Calu3 (cell line): ENCODE measurements at regions of chr1 and their contacts with region 1.

Region 1: DNA sequence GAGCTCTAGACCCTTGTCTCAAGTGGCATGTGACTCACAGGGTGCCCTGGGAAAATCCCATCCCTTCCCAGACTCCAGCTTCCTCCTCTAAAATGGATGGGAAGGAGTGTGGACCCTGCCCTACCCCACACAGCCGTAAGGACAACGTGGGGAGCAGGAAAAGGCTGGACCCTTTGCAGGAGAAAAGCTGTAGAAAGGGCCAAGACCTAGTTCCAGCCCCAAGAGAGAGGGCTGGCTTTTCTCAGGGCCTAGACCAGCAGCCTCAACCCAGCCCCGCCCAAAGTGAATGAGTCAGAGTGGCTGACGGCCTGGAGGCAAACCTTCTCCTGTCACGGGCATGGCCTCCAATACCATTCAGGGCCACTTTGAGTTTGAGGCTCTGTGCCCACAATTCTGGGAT is 1.1 kb downstream of the LAMB3 start:
- DNase-seq: peak; percentile 91
- H3K4me3 Mint-ChIP-seq: peak overlapping the region; percentile 89
- H3K27ac Mint-ChIP-seq: peak overlapping the region; percentile 97
- H3K4me1 Mint-ChIP-seq: peaks cover 83% of the 10 kb centered on the region
- H3K27me3 Mint-ChIP-seq: no peaks in the 10 kb centered on the region
- CTCF ChIP-seq: no peak

Region 2: DNA sequence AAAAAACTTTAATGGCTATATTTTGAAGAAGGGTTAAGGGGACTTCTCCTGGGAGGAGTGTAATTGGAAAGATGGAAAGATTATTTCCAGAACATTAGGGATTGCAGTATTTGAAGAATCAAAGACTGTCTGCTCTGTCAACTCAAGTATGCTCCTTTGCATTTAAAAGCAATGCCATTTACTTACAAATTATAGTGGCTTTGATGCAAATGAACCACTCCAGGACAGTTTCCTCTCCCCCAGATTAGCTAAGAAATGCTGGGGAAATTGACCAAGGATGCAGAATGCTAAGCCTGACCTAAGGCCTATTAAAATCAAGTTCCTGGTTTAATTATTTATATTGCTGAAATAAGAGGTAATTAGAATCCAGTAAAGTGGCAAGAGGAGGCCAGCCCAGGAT is 178.1 kb before region 1 on chr1:
- CTCF ChIA-PET with region 1: no interaction called
- intact Hi-C with region 1: no loop called
- DNase-seq: no peak
- H3K4me3 Mint-ChIP-seq: no peak overlapping the region
- H3K27ac Mint-ChIP-seq: no peak overlapping the region
- H3K4me1 Mint-ChIP-seq: no peaks in the 10 kb centered on the region
- H3K27me3 Mint-ChIP-seq: peaks cover 93% of the 10 kb centered on the region
- CTCF ChIP-seq: no peak

Region 3: DNA sequence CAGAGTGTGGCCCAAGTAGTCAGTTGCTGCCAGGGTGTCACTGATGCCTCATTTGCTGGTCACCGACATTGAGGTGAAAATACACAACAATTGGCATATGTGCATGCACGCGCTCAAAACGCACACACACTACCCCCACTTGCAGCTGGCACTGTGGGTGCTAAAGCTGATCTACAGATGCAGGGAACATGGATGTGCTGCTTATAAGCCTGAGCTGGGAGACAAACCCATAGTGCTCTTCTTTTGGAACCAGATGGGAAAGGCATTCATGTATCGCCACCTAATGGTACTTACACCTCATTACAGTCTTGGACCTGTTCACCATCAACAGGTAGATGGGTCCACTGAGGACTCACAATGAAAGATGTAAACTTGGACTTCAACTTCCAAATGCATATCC is 137.9 kb before region 1 on chr1:
- CTCF ChIA-PET with region 1: no interaction called
- intact Hi-C with region 1: no loop called
- DNase-seq: peak; percentile 21
- H3K4me3 Mint-ChIP-seq: no peak overlapping the region
- H3K27ac Mint-ChIP-seq: no peak overlapping the region
- H3K4me1 Mint-ChIP-seq: no peaks in the 10 kb centered on the region
- H3K27me3 Mint-ChIP-seq: peaks cover 47% of the 10 kb centered on the region
- CTCF ChIP-seq: peak; percentile 62

Region 4: DNA sequence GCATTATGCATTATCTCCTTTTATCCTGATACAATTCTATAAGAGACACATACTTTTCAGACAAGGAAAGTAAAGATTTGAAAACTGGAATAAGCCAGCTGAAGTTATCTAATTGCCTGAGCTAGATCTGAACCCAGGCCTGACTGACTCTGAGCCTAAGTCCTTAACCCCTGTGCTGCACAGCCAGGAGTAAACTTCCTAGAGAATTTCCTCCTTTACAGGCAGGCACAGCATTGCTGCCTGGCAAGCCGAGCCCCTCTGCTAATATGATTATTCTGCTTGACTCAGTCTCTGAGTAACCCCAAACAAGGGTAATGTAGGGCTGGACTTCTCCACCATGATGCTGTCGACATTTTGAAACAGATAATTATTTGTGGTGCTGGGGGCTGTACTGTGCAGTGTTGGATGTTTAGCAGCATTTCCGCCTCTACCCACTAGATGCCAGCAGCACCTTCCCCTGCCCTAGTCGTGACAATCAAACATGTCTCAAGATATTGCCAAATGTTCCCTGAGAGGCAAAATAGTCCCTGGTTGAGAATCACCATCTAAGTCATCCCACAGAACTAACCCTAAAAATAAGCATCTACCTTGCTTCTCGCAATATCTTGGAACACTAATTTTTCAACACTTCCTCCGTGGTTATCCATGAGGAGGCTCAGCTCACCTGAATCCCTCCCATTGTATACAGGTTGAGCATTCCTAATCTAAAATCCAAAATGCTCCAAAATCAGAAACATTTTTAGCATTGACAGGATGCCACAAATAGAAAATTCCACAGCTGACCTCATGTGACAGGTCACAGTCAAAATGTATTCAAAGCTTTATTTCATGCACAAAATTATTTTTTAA is 49.1 kb before region 1 on chr1:
- CTCF ChIA-PET with region 1: interaction called, 4 read pairs
- intact Hi-C with region 1: loop called (anchors 1 kb)
- DNase-seq: peak; percentile 61
- H3K4me3 Mint-ChIP-seq: no peak overlapping the region
- H3K27ac Mint-ChIP-seq: no peak overlapping the region
- H3K4me1 Mint-ChIP-seq: no peaks in the 10 kb centered on the region
- H3K27me3 Mint-ChIP-seq: peaks cover 40% of the 10 kb centered on the region
- CTCF ChIP-seq: peak; percentile 85

Region 5: GRCh38 chr1:209674957-209675564 is 23.9 kb after region 1 on chr1 and contains the start of gene G0S2:
- CTCF ChIA-PET with region 1: interaction called, 58 read pairs
- intact Hi-C with region 1: loop called (anchors 2 kb)
- DNase-seq: peak; percentile 46
- H3K4me3 Mint-ChIP-seq: peak within 1 kb of the TSS; percentile 80
- H3K27ac Mint-ChIP-seq: peak within 1 kb of the TSS; percentile 57
- H3K4me1 Mint-ChIP-seq: peaks cover 54% of the 10 kb centered on the region
- H3K27me3 Mint-ChIP-seq: peaks cover 30% of the 10 kb centered on the region
- CTCF ChIP-seq: no peak
- total RNA-seq, gene G0S2: 2.4 and 4.0 TPM in 2 replicates

Region 6: DNA sequence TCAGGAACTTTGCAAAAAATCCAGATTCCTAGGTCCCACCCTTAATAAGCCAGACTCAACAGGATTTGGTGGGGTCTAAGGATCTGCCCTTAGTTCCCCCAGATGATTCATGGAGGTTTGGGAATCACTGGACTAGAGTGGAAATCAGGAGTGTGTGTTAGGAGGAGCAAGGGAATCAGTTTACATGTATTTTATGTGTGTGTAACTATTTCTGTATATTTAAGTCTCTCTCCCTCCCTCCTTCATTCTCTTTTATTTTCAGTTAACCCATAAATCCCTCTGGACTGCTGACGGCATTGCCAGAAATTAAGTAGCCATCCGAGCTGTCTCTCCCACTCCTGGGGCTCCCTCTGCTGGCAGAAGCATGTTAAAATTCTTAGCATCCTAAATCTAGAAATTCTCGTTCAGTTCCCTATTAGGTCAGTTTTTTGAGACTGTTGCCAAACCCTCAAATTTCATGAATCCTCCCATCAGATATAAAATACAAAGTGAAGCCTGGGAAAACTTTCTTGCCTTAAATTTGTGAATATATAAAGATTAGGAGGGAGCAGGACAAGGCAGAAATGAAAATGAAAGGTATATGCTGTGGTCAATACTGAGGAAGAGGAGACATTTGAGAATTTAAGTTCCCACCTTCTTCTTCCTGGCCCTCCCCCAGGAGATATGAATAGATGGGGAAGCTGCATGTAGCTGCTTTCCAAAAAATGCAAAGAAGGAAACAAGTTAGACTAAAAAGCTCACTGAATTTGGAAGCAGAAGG is 41.8 kb after region 1 on chr1:
- CTCF ChIA-PET with region 1: interaction called, 24 read pairs
- intact Hi-C with region 1: loop called (anchors 1 kb)
- DNase-seq: peak; percentile 90
- H3K4me3 Mint-ChIP-seq: no peak overlapping the region
- H3K27ac Mint-ChIP-seq: peak overlapping the region; percentile 76
- H3K4me1 Mint-ChIP-seq: peaks cover 35% of the 10 kb centered on the region
- H3K27me3 Mint-ChIP-seq: peaks cover 20% of the 10 kb centered on the region
- CTCF ChIP-seq: peak; percentile 81

Region 7: DNA sequence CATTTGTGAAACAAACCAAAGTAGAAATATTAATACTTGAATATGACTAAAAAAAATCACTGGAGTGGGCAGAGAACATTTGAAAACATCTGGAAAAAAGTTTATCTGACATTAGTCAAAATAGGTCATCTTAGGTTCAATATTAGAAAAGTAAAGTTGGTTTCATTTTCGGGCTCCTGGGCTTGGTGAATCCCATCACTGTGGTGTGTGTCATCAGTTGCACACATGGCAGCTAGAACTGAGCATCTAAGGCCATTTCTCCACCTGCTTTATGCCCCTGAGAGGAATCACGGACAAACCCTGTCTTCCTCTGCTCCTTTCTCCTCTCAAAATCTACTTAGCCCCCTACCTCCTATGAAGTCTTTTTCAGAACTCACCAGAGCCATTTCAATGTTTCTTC is 58.9 kb after region 1 on chr1:
- CTCF ChIA-PET with region 1: no interaction called
- intact Hi-C with region 1: no loop called
- DNase-seq: no peak
- H3K4me3 Mint-ChIP-seq: no peak overlapping the region
- H3K27ac Mint-ChIP-seq: no peak overlapping the region
- H3K4me1 Mint-ChIP-seq: peaks cover 39% of the 10 kb centered on the region
- H3K27me3 Mint-ChIP-seq: no peaks in the 10 kb centered on the region
- CTCF ChIP-seq: no peak

Region 8: GRCh38 chr1:209747580-209748262 is 96.6 kb after region 1 on chr1:
- CTCF ChIA-PET with region 1: interaction called, 7 read pairs
- intact Hi-C with region 1: loop called (anchors 5 kb)
- DNase-seq: peak; percentile 99
- H3K4me3 Mint-ChIP-seq: peak overlapping the region; percentile 14
- H3K27ac Mint-ChIP-seq: no peak overlapping the region
- H3K4me1 Mint-ChIP-seq: peaks cover 16% of the 10 kb centered on the region
- H3K27me3 Mint-ChIP-seq: no peaks in the 10 kb centered on the region
- CTCF ChIP-seq: peak; percentile 95

Region 9: DNA sequence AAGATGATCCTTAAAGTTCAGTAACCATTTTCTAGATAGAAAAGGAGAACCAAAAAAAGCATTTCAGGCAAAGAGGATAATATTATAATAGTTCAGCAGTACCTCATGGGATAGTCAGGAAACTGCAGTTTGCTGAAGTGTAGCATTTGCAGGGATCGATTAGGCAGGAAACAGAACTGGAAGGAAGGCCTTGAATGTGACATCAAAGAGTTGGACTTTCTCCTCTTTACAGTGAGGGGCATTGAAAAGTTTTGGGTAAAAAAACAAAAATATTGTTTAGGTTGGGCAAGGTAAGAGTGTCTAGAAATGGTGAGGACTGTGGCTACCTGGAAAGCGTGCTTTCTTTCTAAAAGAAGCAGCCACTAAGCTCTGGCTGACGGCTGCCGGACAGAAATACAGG is 162.8 kb after region 1 on chr1:
- CTCF ChIA-PET with region 1: no interaction called
- intact Hi-C with region 1: no loop called
- DNase-seq: no peak
- H3K4me3 Mint-ChIP-seq: no peak overlapping the region
- H3K27ac Mint-ChIP-seq: no peak overlapping the region
- H3K4me1 Mint-ChIP-seq: peaks cover 10% of the 10 kb centered on the region
- H3K27me3 Mint-ChIP-seq: no peaks in the 10 kb centered on the region
- CTCF ChIP-seq: no peak

Region 10: DNA sequence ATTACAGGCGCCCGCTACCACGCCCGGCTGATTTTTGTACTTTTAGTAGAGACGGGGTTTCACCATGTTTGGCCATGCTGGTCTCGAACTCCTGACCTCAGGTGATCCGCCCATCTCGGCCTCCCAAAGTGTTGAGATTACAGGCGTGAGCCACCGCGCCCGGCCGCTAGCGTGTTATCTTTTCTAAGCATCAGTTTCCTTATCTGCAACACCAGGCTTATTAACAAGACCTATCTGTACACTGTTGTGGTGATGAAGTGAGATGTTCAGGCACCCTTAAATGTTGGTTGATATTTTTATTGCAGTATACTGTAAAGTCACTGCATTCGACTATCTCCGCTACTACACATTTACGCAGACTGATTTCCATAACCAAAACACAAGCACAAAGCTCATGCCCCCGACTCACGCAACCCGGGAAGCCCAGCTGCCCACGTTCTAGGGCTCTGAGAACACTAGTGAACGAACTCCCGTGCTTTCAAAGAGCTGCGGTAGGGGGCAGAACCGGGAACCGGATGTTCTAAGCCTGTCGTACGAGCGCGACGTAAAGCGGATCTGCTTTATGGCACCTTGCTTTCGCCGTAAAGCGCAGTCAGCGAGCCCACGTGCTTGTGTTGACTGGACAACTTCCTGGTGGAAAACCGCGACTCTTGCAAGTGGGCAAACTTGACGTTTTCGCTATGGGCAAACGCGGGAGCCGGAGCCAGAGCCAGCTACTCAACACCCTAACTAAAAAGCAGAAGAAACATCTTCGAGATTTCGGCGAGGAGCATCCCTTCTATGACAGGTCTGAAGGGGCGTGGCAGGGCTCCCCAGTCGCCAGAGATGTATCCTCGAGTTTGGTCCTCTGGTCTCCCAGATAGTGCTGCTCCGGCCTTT is 176.5 kb after region 1 on chr1 and contains the start of gene UTP25:
- CTCF ChIA-PET with region 1: interaction called, 3 read pairs
- intact Hi-C with region 1: loop called (anchors 10 kb)
- DNase-seq: peak; percentile 94
- H3K4me3 Mint-ChIP-seq: peak within 1 kb of the TSS; percentile 82
- H3K27ac Mint-ChIP-seq: peak within 1 kb of the TSS; percentile 92
- H3K4me1 Mint-ChIP-seq: peaks cover 67% of the 10 kb centered on the region
- H3K27me3 Mint-ChIP-seq: no peaks in the 10 kb centered on the region
- CTCF ChIP-seq: peak; percentile 59
- total RNA-seq, gene UTP25: 18.6 and 19.1 TPM in 2 replicates

Region 11: DNA sequence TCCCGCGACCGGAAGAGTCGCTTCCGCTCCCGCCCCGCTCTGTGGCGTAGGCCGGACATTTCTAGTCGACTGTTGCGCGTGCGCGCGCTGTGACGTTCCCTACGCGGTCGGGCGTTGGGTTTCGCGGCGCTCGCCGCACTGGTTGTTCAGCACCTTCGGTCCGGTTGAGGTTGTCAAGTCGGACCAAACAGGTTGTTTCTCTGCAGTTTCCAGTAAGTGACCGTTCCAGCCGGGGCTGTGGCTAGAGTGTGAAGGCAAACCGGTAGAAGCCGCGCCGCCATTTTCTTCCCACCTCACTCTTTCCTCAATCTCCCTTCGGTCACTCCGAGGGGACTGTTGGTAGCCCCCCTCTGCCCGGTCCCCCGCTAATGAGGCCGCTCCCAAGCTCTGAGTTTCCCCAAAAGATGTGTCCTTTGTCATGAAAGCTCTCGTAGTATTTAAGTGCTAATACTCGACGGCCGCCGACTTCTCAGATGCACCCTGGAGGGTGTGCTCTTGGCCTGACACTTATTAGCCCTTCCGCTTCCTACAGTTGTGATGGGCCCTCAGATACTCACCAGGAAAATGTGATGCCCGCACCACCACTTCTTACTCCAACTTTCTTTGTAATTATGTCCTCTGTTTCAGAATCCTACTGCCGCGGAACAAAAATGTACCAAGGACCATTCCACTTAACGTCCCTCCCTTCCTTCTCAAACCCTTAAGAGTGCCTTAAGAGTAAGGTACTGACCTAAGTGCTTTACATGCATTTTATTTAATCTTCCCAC is 1731.7 kb after region 1 on chr1:
- CTCF ChIA-PET with region 1: no interaction called
- intact Hi-C with region 1: loop called (anchors 10 kb)
- DNase-seq: peak; percentile 93
- H3K4me3 Mint-ChIP-seq: peak overlapping the region; percentile 94
- H3K27ac Mint-ChIP-seq: peak overlapping the region; percentile 100
- H3K4me1 Mint-ChIP-seq: peaks cover 13% of the 10 kb centered on the region
- H3K27me3 Mint-ChIP-seq: no peaks in the 10 kb centered on the region
- CTCF ChIP-seq: no peak